ENCODE measurements at regions of chr19 and their contacts with region 1.

Region 1: GRCh38 chr19:45670670-45671453 is 2.8 kb downstream of the GIPR start:
- DNase-seq: peak; percentile 93
- ATAC-seq: peak; percentile 81
- H3K4me3 ChIP-seq: peak overlapping the region; percentile 76 to 85
- H3K27ac ChIP-seq: peak overlapping the region; percentile 71
- H3K4me1 ChIP-seq: peaks cover 11 to 40% of the 10 kb centered on the region in 2 experiments
- H3K27me3 ChIP-seq: no peaks in the 10 kb centered on the region
- CTCF ChIP-seq: no peak
- POLR2A ChIP-seq: peak; percentile 42
- RAD21 ChIP-seq: no peak

Region 2: DNA sequence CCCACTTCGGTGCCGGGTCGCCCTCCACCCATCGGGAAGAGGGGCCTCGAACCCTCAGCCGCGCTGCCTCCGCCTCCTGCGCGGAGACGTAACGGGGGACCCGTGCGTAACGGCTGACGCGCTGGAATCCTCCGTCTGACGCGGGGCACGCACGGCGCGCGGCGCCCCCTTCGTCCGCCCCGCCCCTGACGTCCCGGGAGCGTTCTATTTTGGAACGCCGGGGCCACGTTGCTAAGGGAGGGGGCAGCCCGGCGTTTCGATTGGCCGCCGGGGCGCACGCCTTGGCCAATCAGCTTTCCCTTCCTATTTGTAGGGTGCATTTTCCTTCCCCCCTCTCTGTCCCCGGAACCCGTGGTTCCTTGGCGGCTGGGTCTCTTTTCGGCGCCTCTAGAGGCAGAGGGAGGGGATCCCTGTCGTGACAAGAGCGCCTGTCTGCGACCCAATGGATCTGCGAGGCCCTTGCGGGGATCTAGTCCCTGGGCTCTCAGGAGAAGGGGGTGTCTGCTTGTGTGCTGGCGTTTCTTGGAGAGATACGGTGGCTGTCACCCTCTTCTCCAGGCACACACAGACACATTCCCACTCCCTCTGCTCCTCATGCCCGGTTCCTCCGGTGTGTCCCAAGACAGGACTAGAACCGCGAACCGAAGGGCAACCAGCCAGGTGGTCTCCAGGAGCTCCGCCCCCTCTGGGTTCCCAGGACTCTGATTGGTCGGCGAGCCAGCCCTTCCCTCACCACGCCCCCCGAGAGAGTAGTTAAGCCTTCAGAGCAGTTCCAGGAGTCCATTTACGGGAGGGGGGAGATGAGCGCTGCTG is 201.5 kb before region 1 on chr19:
- CTCF ChIA-PET with region 1: no interaction called
- POLR2A ChIA-PET with region 1: interaction called, 11 read pairs
- RAD21 ChIA-PET with region 1: no interaction called
- intact Hi-C with region 1: no loop called
- DNase-seq: peak; percentile 76
- ATAC-seq: peak; percentile 80
- H3K4me3 ChIP-seq: peak overlapping the region; percentile 74 to 97
- H3K27ac ChIP-seq: peak overlapping the region; percentile 78
- H3K4me1 ChIP-seq: peaks cover 4 to 43% of the 10 kb centered on the region in 2 experiments
- H3K27me3 ChIP-seq: no peaks in the 10 kb centered on the region
- CTCF ChIP-seq: no peak
- POLR2A ChIP-seq: no peak
- RAD21 ChIP-seq: no peak

Region 3: DNA sequence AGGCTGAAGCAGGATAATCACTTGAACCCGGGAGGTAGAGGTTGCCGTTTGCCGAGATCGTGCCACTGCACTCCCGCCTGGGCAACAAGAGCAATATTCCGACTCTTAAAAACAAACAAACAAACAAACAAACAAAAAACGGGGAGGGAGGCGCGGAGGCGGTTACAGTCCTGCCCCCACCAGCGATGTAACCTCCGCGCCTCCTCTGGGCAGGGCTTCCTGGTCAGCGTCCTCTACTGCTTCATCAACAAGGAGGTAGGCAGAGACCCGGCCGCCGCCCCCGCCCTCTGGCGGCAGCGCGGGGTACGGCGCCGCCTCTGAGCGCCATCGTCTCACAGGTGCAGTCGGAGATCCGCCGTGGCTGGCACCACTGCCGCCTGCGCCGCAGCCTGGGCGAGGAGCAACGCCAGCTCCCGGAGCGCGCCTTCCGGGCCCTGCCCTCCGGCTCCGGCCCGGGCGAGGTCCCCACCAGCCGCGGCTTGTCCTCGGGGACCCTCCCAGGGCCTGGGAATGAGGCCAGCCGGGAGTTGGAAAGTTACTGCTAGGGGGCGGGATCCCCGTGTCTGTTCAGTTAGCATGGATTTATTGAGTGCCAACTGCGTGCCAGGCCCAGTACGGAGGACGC is 10.6 kb after region 1 on chr19:
- CTCF ChIA-PET with region 1: interaction called, 5 read pairs
- POLR2A ChIA-PET with region 1: interaction called, 16 read pairs
- RAD21 ChIA-PET with region 1: interaction called in 1 of 2 experiments, 3 read pairs
- intact Hi-C with region 1: no loop called
- DNase-seq: peak; percentile 71
- ATAC-seq: peak; percentile 74
- H3K4me3 ChIP-seq: peak overlapping the region; percentile 28 to 56
- H3K27ac ChIP-seq: peak overlapping the region; percentile 82
- H3K4me1 ChIP-seq: peaks cover 17 to 35% of the 10 kb centered on the region in 2 experiments
- H3K27me3 ChIP-seq: no peaks in the 10 kb centered on the region
- CTCF ChIP-seq: peak; percentile 78 to 95 (median 89)
- POLR2A ChIP-seq: no peak
- RAD21 ChIP-seq: peak; percentile 71

Region 4: GRCh38 chr19:45692187-45693105 is 21.6 kb after region 1 on chr19 and contains the start of gene QPCTL:
- CTCF ChIA-PET with region 1: interaction called, 11 read pairs
- POLR2A ChIA-PET with region 1: interaction called, 24 read pairs
- RAD21 ChIA-PET with region 1: no interaction called
- intact Hi-C with region 1: no loop called
- DNase-seq: peak; percentile 99
- ATAC-seq: peak; percentile 91
- H3K4me3 ChIP-seq: peak within 1 kb of the TSS; percentile 86 to 98
- H3K27ac ChIP-seq: peak within 1 kb of the TSS; percentile 79
- H3K4me1 ChIP-seq: peaks cover 3 to 13% of the 10 kb centered on the region in 2 experiments; a peak in 3 of 4 replicates
- H3K27me3 ChIP-seq: no peaks in the 10 kb centered on the region
- CTCF ChIP-seq: no peak
- POLR2A ChIP-seq: peak; percentile 61
- RAD21 ChIP-seq: no peak
- total RNA-seq, gene QPCTL: 19.5 TPM

Measured in HCT116 (cell line).